PC-3 (cell line): ENCODE measurements at regions of chr3 and their contacts with region 1.

Region 1: DNA sequence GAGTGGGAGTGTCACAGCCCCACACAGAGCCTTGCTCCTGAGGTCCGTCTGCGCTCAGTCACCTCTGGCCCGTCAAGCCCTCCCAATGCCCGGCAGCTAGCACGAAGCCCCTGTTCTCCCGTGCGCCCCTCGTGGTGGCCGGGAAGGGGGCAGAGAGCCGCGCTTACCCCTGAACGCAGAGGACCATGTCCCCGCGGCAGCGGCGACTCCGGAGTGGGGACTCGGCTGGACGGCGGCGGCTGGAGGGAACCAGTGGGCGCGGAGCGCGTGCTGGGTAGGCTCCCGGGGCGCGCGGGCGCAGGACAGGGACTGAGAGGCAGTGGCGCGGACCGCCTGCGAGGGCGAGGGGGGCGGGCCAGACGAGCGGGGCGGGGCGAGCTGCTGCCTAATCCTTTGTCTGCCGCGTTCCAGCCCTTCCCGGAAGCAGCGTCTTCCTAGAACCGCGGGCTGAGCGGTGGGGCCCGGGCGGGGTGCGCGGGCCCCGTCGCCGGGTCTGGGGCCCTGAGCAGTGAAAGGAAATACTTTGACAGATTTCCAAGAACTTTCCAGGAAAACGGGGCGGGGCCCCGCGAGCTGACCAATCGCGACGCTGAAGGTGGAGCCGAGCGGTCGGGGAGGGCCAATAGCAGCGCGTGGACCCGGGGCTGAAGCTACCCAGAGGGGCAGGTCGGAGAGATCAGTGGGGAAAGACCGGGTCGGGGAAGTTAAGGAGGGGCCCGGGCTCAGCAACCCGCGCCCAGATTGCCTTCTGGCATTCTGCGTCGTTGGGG is at the start of gene CISH:
- DNase-seq: peak; percentile 96
- ATAC-seq: peak; percentile 73
- H3K4me3 ChIP-seq: peak within 1 kb of the TSS; percentile 71
- H3K27ac ChIP-seq: no peak within 1 kb of the TSS
- H3K4me1 ChIP-seq: peaks cover 23% of the 10 kb centered on the region
- H3K27me3 ChIP-seq: no peaks in the 10 kb centered on the region
- CTCF ChIP-seq: peak; percentile 44
- total RNA-seq, gene CISH: 1.6 and 2.3 TPM in 2 replicates

Region 2: GRCh38 chr3:50192689-50193141 is 418.9 kb before region 1 on chr3:
- CTCF ChIA-PET with region 1: no interaction called
- POLR2A ChIA-PET with region 1: no interaction called
- intact Hi-C with region 1: no loop called
- DNase-seq: peak; percentile 85
- ATAC-seq: peak; percentile 20
- H3K4me3 ChIP-seq: no peak overlapping the region
- H3K27ac ChIP-seq: no peak overlapping the region
- H3K4me1 ChIP-seq: no peaks in the 10 kb centered on the region; the same call in 1 of the 2 replicates
- H3K27me3 ChIP-seq: no peaks in the 10 kb centered on the region
- CTCF ChIP-seq: peak; percentile 96

Region 3: DNA sequence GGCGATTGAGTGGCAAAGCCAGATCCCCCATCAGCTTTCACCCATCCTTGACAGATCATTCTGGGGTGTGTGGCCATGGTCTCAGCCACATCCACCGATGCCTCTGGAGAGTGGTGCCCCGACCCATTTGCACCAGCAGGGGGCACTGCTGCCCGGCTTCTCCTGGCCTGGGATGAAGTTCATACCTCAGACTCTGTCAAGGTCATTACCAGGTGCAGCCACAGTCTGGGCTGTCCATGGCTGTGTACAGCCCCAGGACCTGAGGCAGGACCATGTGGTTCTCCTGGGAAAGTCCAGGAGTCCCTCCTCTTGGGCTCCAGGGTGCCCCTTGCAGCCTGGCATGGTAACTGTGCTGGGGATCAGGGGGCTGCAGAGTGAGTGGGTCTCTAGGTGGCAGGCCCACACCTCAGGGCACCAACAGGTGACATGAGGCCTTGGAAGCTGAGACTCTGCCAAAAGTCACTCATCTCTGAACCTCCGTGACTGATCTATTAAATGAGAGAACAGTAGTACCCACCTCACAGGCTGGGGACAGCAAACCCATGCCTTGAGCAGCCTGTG is 175.5 kb before region 1 on chr3:
- CTCF ChIA-PET with region 1: no interaction called
- POLR2A ChIA-PET with region 1: no interaction called
- intact Hi-C with region 1: loop called (anchors 2 kb)
- DNase-seq: peak; percentile 77
- ATAC-seq: peak; percentile 89
- H3K4me3 ChIP-seq: no peak overlapping the region
- H3K27ac ChIP-seq: no peak overlapping the region
- H3K4me1 ChIP-seq: no peaks in the 10 kb centered on the region
- H3K27me3 ChIP-seq: no peaks in the 10 kb centered on the region
- CTCF ChIP-seq: peak; percentile 95

Region 4: DNA sequence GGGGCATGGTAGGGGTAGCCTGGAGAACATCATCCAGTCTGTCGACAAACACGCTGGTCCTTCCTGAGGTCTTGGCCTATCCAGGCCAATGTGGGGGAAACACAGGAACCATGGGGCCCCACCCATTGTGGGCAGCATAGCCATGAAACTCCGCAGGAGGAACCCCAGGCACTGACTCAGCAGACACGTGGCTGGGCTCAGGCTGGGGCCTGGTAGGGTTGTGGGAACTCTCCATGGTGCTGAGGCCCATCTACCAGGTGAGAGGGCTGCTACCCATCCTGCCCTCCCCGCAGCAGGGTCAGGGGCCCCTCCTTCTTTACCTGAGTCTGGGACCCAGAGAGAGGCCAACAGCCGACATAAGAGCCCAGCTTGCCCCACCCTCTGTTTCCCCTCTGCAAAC is 85.7 kb before region 1 on chr3:
- CTCF ChIA-PET with region 1: no interaction called
- POLR2A ChIA-PET with region 1: no interaction called
- intact Hi-C with region 1: no loop called
- DNase-seq: peak; percentile 53
- ATAC-seq: peak; percentile 66
- H3K4me3 ChIP-seq: no peak overlapping the region
- H3K27ac ChIP-seq: no peak overlapping the region
- H3K4me1 ChIP-seq: no peaks in the 10 kb centered on the region
- H3K27me3 ChIP-seq: peaks cover 15% of the 10 kb centered on the region; the same call in 1 of the 2 replicates
- CTCF ChIP-seq: no peak

Region 5: GRCh38 chr3:50568947-50569749 is 42.5 kb before region 1 on chr3 and contains the start of gene HEMK1:
- CTCF ChIA-PET with region 1: no interaction called
- POLR2A ChIA-PET with region 1: interaction called, 10 read pairs
- intact Hi-C with region 1: loop called (anchors 1 kb)
- DNase-seq: peak; percentile 96
- ATAC-seq: peak; percentile 71
- H3K4me3 ChIP-seq: peak within 1 kb of the TSS; percentile 79
- H3K27ac ChIP-seq: peak within 1 kb of the TSS; percentile 31
- H3K4me1 ChIP-seq: peaks cover 22% of the 10 kb centered on the region; the same call in 1 of the 2 replicates
- H3K27me3 ChIP-seq: no peaks in the 10 kb centered on the region
- CTCF ChIP-seq: no peak
- total RNA-seq, gene HEMK1: 20.3 and 22.2 TPM in 2 replicates

Region 6: GRCh38 chr3:50639055-50639494 is 27.4 kb after region 1 on chr3:
- CTCF ChIA-PET with region 1: no interaction called
- POLR2A ChIA-PET with region 1: no interaction called
- intact Hi-C with region 1: no loop called
- DNase-seq: peak; percentile 89
- ATAC-seq: peak; percentile 94
- H3K4me3 ChIP-seq: no peak overlapping the region
- H3K27ac ChIP-seq: peak overlapping the region; percentile 76
- H3K4me1 ChIP-seq: peaks cover 37% of the 10 kb centered on the region
- H3K27me3 ChIP-seq: no peaks in the 10 kb centered on the region
- CTCF ChIP-seq: no peak

Region 7: GRCh38 chr3:50674349-50675178 is 62.9 kb after region 1 on chr3 and contains the start of gene DOCK3:
- CTCF ChIA-PET with region 1: interaction called, 6 read pairs
- POLR2A ChIA-PET with region 1: no interaction called
- intact Hi-C with region 1: loop called (anchors 5 kb)
- DNase-seq: peak; percentile 60
- ATAC-seq: peak; percentile 71
- H3K4me3 ChIP-seq: peak within 1 kb of the TSS; percentile 48; the same call in 1 of the 2 replicates
- H3K27ac ChIP-seq: no peak within 1 kb of the TSS
- H3K4me1 ChIP-seq: peaks cover 14% of the 10 kb centered on the region
- H3K27me3 ChIP-seq: peaks cover 69% of the 10 kb centered on the region
- CTCF ChIP-seq: no peak
- total RNA-seq, gene DOCK3: under 0.01 and 0.15 TPM in 2 replicates

Region 8: GRCh38 chr3:51099794-51100535 is 488.3 kb after region 1 on chr3:
- CTCF ChIA-PET with region 1: interaction called, 5 read pairs
- POLR2A ChIA-PET with region 1: no interaction called
- intact Hi-C with region 1: loop called (anchors 1 kb)
- DNase-seq: peak; percentile 79
- ATAC-seq: peak; percentile 100
- H3K4me3 ChIP-seq: no peak overlapping the region
- H3K27ac ChIP-seq: no peak overlapping the region
- H3K4me1 ChIP-seq: no peaks in the 10 kb centered on the region
- H3K27me3 ChIP-seq: peaks cover 8% of the 10 kb centered on the region; the same call in 1 of the 2 replicates
- CTCF ChIP-seq: peak; percentile 90

Region 9: DNA sequence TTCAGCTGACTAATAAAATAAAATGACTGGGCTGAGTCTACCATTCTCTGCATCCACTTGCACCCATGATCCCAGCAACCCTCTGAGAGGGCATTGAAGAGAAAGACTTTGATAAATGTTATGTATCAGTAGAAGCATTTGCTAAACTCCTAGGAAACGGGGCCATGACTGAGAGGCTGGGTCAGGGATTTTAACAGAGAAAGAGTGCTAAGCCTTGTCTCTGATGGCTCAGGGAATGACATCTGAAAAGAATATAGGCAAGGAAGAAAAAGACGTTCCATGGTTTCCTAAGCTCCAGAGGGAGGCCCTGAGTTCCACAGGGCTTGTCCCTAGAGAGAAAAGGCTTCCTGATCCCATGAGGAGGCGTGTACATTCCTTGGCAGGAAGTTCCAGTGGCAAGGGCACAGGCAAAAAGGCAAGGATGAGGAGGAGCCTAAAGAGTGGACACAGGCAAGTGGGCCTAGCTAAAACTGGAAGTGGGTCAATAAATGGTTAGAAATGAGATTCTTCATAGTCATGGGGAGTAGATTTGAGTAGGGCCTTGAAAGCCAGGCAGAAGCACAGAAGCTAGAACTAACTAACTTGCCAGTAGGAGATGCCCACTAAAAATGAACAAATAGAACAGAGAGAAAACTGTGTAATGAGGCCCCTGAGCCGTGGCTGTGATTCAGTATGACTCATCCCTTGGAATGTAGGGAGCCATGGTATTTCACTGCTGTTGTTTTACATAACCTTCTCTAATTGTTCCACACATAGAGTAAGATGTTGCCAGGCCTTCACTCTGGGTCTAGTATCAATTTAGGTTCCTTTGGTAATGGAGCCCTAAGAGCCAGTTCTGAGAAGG is 728.6 kb after region 1 on chr3:
- CTCF ChIA-PET with region 1: no interaction called
- POLR2A ChIA-PET with region 1: no interaction called
- intact Hi-C with region 1: loop called (anchors 1 kb)
- DNase-seq: peak; percentile 93
- ATAC-seq: peak; percentile 93
- H3K4me3 ChIP-seq: peak overlapping the region; percentile 7; the same call in 1 of the 2 replicates
- H3K27ac ChIP-seq: peak overlapping the region; percentile 53
- H3K4me1 ChIP-seq: peaks cover 24% of the 10 kb centered on the region
- H3K27me3 ChIP-seq: no peaks in the 10 kb centered on the region
- CTCF ChIP-seq: no peak

Region 10: DNA sequence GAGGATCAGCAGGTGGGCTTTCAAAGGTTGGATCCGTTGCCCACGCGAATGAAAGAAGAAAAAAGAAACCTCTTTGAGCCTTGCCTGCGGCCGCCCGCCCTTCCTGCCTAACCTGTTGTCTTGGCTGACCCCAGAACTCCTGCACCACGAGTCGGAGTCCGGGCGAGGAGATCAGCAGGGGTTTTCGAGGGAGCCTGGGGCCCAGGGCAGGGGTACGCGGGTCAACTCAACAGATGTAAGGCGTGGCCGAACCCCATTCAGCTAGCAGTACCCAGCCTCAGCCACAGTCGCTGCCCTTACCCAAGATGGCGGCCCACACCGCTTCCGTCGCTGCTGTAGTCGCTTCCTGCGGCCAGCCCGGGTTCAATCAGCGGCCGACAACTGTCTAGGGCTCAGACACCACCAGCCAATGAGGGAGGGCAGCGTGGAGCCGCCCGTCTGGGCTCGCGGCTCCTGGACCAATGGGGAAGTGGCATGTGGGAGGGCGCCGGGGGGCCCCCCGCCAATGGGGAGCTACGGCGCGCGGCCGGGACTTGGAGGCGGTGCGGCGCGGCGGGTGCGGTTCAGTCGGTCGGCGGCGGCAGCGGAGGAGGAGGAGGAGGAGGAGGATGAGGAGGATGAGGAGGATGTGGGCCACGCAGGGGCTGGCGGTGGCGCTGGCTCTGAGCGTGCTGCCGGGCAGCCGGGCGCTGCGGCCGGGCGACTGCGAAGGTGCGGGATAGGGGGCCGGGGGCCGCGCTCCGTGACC is 773.3 kb after region 1 on chr3 and contains the start of gene MANF:
- CTCF ChIA-PET with region 1: interaction called, 3 read pairs
- POLR2A ChIA-PET with region 1: interaction called, 6 read pairs
- intact Hi-C with region 1: loop called (anchors 1 kb)
- DNase-seq: peak; percentile 98
- ATAC-seq: peak; percentile 91
- H3K4me3 ChIP-seq: peak within 1 kb of the TSS; percentile 85
- H3K27ac ChIP-seq: peak within 1 kb of the TSS; percentile 79
- H3K4me1 ChIP-seq: peaks cover 40% of the 10 kb centered on the region
- H3K27me3 ChIP-seq: no peaks in the 10 kb centered on the region
- CTCF ChIP-seq: no peak
- total RNA-seq, gene MANF: 200 and 221 TPM in 2 replicates